ENCODE measurements at regions of chr1 and their contacts with region 1.

Region 1: GRCh38 chr1:201719812-201720521 is 109.0 kb upstream of the IPO9 start:
- DNase-seq: no peak
- H3K4me3 Mint-ChIP-seq: no peak overlapping the region
- H3K27ac Mint-ChIP-seq: no peak overlapping the region
- H3K4me1 Mint-ChIP-seq: no peaks in the 10 kb centered on the region
- H3K27me3 Mint-ChIP-seq: peaks cover 19% of the 10 kb centered on the region

Region 2: DNA sequence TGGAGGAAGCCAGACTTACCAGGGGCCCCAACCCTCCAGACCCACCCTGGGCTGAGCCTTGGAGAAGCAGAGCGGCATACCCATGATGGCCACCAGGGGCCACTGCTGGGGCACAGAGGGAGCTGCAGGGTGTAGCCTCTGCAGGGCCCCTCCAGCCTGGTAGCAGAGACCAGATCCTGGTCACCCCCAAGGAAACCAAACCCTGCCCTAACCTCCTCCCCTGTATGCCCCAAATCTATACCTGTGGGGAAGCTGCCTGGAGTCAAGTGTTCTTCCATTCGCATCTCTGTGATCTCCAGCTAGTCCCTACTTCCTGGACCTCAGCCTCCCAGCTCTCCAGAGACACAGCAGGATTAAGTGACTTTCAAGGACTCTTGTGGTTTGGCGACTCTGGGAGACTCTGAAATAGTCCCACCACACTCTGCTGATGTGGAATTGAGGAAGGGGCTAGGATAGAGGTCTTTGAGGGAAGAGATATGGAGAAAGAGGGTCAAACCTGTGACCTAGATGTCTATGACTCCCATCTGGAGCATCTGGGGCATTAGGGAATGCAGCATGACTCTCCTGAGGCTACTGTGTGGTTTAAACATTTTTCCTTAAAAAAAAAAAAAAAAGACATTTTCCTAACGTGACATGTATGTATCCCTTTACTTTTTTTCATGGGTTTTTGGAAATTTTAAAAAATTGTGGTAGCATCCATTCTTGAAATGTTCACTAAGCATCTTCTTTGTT is 10.2 kb before region 1 on chr1:
- CTCF ChIA-PET with region 1: interaction called, 16 read pairs
- DNase-seq: peak; percentile 69
- H3K4me3 Mint-ChIP-seq: no peak overlapping the region
- H3K27ac Mint-ChIP-seq: no peak overlapping the region
- H3K4me1 Mint-ChIP-seq: no peaks in the 10 kb centered on the region
- H3K27me3 Mint-ChIP-seq: peaks cover 23% of the 10 kb centered on the region

Region 3: DNA sequence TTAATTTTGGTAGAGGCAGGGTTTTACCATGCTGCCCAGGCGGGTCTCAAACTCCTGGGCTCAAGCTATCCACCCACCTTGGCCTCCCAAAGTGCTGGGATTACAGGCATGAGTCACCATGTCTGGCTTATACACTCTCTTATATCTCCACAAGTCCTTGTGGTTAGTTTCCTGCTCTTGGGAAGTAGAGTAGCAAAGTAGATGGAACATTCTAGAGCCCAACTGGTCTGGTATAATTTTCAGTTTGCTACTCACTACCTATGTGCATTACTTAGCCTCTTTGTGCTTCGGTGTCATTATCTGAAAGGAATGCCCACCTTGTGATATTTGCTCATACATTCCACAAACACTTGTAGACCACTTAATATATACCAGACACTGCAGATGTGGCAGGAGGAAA is 12.4 kb after region 1 on chr1:
- CTCF ChIA-PET with region 1: no interaction called
- DNase-seq: no peak
- H3K4me3 Mint-ChIP-seq: no peak overlapping the region
- H3K27ac Mint-ChIP-seq: no peak overlapping the region
- H3K4me1 Mint-ChIP-seq: no peaks in the 10 kb centered on the region
- H3K27me3 Mint-ChIP-seq: peaks cover 49% of the 10 kb centered on the region

Region 4: DNA sequence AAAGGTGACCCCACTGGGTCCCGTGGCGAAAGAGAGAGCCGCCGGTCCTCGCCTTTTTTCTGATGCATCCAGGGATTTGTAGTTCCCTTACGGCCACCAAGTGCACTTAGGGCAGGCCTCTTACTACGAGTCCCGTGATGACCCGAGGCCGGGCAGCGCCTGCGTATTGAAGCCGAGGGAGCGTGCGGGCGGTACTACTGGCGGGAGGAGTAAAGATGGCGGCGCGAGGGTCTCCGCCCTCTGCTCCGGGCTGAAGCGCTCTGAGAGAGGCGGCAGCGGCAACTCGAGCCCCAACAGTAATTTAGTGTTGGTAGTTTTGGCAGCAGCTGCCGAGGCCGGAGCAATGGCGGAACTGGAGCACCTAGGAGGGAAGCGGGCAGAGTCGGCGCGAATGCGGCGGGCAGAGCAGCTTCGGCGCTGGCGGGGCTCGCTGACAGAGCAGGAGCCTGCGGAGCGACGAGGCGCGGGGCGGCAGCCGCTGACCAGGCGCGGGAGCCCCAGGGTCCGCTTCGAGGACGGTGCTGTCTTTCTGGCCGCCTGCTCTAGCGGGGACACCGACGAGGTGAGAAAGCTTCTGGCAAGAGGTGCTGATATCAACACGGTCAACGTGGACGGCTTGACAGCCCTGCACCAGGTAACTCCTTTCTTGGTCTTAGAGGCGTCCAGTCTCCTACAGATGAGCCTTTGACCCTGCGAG is 628.7 kb after region 1 on chr1 and contains the start of gene PPP1R12B:
- CTCF ChIA-PET with region 1: no interaction called
- DNase-seq: peak; percentile 98
- H3K4me3 Mint-ChIP-seq: peak within 1 kb of the TSS; percentile 83
- H3K27ac Mint-ChIP-seq: peak within 1 kb of the TSS; percentile 90
- H3K4me1 Mint-ChIP-seq: peaks cover 25% of the 10 kb centered on the region
- H3K27me3 Mint-ChIP-seq: peaks cover 6% of the 10 kb centered on the region

Measured in activated naive CD4-positive, alpha-beta T cell treated with anti-CD3 and anti-CD28 coated beads, Interleukin-2, amount 10 ng/mL, durations not matched to agents 7 days and 5 days (primary cell).